ENCODE measurements at regions of chr18 and their contacts with region 1.

Region 1: GRCh38 chr18:55477499-55477859 is 110.5 kb downstream of the TCF4 start:
- DNase-seq: no peak
- ATAC-seq: peak; percentile 45 to 86 (median 74)
- H3K4me3 ChIP-seq: peak overlapping the region; percentile 5 to 62 (median 49)
- H3K27ac ChIP-seq: peak overlapping the region; percentile 45 to 89 (median 82)
- H3K4me1 ChIP-seq: peaks cover 0 to 44% (median 11%) of the 10 kb centered on the region in 12 donors
- H3K27me3 ChIP-seq: no peaks in the 10 kb centered on the region
- CTCF ChIP-seq: peak in 4 of 12 donors; percentile 9 to 34 (median 12)
- POLR2A ChIP-seq: no peak

Region 2: DNA sequence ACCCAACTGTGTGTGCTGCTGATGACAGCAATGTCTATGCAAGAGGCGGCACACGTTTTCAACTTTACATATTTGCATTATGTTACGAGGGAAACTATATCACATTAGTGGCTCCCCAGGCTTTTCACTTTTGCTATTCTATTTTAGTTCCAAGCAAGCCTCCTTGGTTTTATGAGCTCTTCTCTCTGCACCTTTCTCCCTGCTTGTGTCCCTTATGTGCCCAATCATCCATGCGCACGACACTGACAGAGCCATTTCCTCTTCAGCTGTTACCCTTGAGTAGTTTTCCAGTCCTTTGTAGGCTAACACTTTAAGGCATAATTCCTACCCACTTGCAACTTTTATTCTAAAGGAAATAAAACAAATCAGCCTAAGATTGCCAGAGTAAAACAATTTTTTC is 43.8 kb before region 1 on chr18:
- intact Hi-C with region 1: loop called in 2 of 10 experiments (anchors 5 to 10 kb)
- DNase-seq: no peak
- ATAC-seq: no peak
- H3K4me3 ChIP-seq: no peak overlapping the region
- H3K27ac ChIP-seq: no peak overlapping the region
- H3K4me1 ChIP-seq: peaks cover 0 to 52% (median 20%) of the 10 kb centered on the region in 12 donors
- H3K27me3 ChIP-seq: no peaks in the 10 kb centered on the region
- CTCF ChIP-seq: no peak
- POLR2A ChIP-seq: no peak

Region 3: DNA sequence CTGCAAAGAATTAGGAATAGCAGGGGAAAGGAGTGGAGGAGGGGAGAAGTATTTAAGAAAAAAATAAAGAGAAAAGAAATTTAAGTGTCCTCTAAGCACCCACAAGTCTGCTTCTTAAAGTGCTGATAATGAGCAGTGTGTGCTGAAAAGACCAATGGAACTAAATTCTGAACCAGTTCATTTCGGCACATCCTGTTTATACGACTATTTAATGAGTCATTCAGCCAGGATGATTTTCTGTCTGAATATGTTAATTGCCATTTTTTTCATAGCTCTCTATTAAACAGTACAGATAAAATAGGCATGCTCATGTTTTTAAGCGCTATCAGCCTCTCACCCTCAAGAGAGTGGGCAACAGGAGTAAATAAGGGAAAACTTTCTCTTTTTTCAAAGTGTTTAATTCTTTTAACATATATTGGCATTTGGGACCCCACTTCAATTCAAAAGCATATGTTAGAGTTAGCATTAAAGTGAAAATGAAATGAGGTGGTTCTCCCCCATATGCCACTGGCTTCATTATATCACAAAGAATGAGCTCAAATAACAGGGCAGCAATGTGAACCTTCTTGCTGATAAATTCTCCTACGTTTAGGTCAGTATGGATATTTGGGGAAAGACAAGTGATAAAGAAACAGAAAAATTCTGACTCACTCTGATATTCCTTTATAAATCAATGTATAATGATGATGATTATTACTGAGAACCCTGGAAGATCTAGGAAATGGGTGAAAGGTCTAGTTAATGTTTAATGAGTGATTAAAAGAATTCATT is 23.0 kb after region 1 on chr18:
- intact Hi-C with region 1: loop called in 1 of 10 experiments (anchors 1 kb)
- DNase-seq: no peak
- ATAC-seq: peak in 3 of 4 donors; percentile 42 to 87 (median 74)
- H3K4me3 ChIP-seq: peak overlapping the region in 2 of 12 donors; percentile 3 to 15
- H3K27ac ChIP-seq: peak overlapping the region; percentile 17 to 68 (median 40)
- H3K4me1 ChIP-seq: peaks cover 0 to 44% (median 22%) of the 10 kb centered on the region in 12 donors
- H3K27me3 ChIP-seq: no peaks in the 10 kb centered on the region
- CTCF ChIP-seq: no peak
- POLR2A ChIP-seq: no peak

Region 4: DNA sequence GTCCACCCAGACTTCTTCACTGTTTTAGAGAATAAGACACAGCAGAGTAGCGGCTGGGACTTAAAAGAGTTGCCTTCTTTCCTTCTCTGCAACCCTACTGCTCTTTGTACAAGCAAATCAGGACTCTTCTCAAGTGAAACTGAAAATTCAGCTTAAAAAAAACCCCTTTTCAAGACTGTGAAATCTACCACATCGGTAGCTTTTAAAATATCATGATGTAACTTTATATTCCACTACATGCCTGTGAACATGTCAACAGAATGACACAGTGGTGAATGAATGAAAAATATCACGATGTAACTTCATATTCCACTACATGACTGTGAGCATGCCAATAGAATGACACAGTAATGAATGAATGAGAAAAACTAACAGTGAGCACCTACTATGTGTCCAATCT is 57.1 kb after region 1 on chr18:
- intact Hi-C with region 1: loop called in 1 of 10 experiments (anchors 10 kb)
- DNase-seq: no peak
- ATAC-seq: no peak
- H3K4me3 ChIP-seq: no peak overlapping the region
- H3K27ac ChIP-seq: no peak overlapping the region
- H3K4me1 ChIP-seq: peaks cover 0 to 27% (median 6%) of the 10 kb centered on the region in 12 donors
- H3K27me3 ChIP-seq: no peaks in the 10 kb centered on the region
- CTCF ChIP-seq: no peak
- POLR2A ChIP-seq: no peak

Measured in heart left ventricle (tissue), 16 donors.